ENCODE measurements at regions of chr10 and their contacts with region 1.

Region 1: DNA sequence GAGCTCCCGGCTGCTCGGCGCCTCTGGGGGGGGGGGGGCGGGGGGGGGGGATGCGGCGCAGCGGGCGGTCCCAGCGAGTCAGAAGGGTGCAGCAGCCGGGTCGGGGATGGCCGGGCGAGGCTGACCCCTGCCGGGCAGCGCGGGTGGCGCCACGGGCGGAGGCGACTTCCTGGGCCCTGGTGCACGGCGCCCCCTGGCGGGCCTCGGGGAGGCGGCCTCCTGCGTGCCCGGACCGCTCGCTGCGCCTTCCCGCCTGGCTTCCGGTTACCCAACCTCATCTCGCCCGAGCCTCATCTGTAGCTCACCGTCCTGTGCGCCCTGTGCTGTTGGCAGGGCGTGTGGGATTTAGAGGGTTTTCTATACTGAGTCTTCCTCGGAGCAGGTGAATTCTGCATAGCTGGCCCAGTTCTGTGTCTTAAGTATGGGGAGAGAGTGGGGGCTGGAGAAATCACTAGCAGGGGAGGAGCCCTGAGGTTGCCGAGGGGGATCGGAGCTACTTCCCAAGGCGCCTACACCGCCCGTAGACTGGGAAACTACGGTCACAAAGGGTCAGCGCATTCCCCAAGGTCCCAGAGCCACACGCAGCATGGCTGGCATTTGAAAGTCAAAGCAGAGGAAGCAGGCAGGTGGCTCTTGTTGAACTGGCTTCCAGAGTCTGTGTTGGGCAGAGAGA is 28.3 kb upstream of the WDFY4 start:
- DNase-seq: peak; percentile 91 to 94 (median 94)
- H3K4me3 ChIP-seq: peak overlapping the region; percentile 30 to 79 (median 69)
- H3K27ac ChIP-seq: no peak overlapping the region
- H3K4me1 ChIP-seq: peaks cover 0 to 26% (median 21%) of the 10 kb centered on the region in 4 experiments
- H3K27me3 ChIP-seq: peaks cover 0 to 6% (median 2%) of the 10 kb centered on the region in 5 experiments

Region 2: GRCh38 chr10:48444266-48444665 is 212.1 kb before region 1 on chr10:
- CTCF ChIA-PET with region 1: interaction called, 10 read pairs
- POLR2A ChIA-PET with region 1: no interaction called
- DNase-seq: peak; percentile 72 to 81 (median 79)
- H3K4me3 ChIP-seq: no peak overlapping the region
- H3K27ac ChIP-seq: no peak overlapping the region
- H3K4me1 ChIP-seq: peaks cover 0 to 57% (median 31%) of the 10 kb centered on the region in 4 experiments
- H3K27me3 ChIP-seq: no peaks in the 10 kb centered on the region

Region 3: DNA sequence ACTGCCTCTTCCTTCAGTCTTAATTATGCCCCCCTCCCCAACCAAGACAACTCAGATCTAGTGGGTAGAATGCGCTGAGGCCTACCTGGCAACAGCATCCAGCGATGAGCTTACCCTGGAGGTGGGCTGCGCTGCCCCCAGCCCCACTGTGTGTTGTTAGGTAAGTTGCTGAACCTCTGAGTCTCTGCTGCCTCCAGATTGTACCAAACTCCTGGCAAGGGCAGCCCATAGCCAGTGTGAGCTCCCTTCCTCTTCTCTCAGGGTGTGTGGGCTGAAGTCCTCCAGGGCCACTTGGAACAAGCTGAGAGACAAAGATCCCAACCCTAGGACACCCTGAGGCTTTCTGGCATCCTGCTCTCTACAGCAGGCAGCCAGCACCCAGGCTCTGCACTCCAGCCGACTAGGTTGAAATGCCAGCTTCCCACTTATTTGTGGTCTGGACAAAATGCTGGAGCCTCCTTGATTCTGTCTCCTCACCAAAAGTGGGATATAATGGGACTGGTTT is 186.8 kb before region 1 on chr10:
- CTCF ChIA-PET with region 1: no interaction called
- POLR2A ChIA-PET with region 1: no interaction called
- DNase-seq: peak in 2 of 3 donors; percentile 36 to 56
- H3K4me3 ChIP-seq: peak overlapping the region in 3 of 7 experiments; percentile 11 to 35 (median 30)
- H3K27ac ChIP-seq: peak overlapping the region; percentile 86 to 93
- H3K4me1 ChIP-seq: peaks cover 8 to 87% (median 81%) of the 10 kb centered on the region in 4 experiments
- H3K27me3 ChIP-seq: no peaks in the 10 kb centered on the region

Region 4: DNA sequence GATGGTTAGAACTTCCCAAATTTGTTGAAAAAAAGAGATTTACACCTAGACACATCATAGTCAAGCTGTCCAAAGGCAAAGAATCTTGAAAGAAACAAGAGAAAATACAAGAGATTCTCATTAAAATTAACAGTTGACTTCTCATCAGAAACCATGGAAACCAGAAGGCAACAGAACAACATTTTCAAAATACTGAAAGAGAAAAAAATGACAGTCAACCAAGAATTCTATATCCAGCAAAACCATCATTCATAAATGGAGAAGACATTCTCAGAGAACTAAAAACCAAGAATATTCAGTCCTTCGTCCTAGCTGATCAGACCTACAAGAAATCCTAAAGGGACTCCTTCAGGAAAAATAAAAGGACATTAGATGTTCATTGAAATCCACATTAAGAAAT is 142.1 kb before region 1 on chr10:
- CTCF ChIA-PET with region 1: no interaction called
- POLR2A ChIA-PET with region 1: no interaction called
- DNase-seq: peak in 2 of 3 donors; percentile 71 to 75
- H3K4me3 ChIP-seq: no peak overlapping the region
- H3K27ac ChIP-seq: peak overlapping the region in 1 of 2 experiments; percentile 74
- H3K4me1 ChIP-seq: peaks cover 9 to 63% (median 38%) of the 10 kb centered on the region in 4 experiments
- H3K27me3 ChIP-seq: no peaks in the 10 kb centered on the region

Region 5: DNA sequence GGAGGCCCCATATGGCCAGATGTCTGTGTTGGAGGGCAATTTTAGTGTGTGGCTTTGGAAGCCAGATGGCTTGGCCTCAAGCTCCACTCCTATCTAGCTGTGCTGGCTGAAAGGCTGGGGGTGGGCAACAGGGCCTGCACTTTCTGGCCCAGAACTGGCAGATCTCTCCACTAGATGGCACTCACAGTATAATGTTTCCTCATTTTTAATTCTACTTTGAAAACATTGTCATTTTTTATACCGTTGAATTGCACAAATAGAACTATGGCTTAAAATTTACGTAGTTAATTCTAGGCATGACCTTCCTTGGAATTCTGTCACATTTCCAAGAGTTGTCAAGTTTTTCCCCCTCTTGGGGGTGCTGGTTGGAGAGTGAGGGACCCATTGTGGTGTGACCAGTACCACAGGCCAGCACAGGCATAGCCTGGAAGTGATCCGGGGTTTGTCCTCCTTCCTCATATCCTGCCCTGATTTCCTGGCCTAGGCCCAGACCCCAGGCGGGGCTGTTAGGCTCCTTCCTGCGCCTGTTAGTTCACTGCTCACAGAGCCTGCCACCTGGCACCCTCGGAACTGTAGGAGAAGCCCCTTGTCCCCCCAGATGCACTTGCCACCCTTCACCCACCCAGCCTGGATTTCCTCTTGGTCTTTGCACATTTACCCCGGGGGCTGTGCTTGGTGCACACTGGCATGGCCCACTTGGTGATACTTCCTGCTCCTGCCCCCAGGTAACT is 104.4 kb before region 1 on chr10:
- CTCF ChIA-PET with region 1: interaction called, 381 read pairs
- POLR2A ChIA-PET with region 1: no interaction called
- DNase-seq: peak; percentile 66 to 83 (median 79)
- H3K4me3 ChIP-seq: peak overlapping the region in 1 of 7 experiments; percentile 17
- H3K27ac ChIP-seq: no peak overlapping the region
- H3K4me1 ChIP-seq: peaks cover 0 to 11% (median 6%) of the 10 kb centered on the region in 4 experiments
- H3K27me3 ChIP-seq: no peaks in the 10 kb centered on the region

Region 6: DNA sequence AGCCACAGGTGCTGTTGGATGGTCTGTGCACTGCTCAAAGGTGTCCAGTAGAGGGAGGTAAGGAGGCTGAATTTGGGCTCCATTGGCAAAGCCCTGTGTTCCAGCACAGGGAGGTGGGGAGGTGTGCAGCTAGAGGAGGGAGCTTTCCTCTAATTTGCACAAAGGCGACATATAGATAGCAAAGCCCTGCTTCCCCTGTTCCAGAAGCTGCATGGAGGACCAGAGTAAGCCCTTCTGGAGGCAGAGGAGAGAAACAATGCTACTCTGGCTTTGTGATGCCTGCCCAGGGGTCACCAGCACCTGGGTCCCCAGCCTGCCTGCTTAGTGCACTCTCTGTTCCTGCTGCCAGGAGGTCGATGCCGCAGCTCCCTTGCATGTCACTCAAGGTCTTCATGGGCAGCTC is 48.1 kb before region 1 on chr10:
- CTCF ChIA-PET with region 1: interaction called, 173 read pairs
- POLR2A ChIA-PET with region 1: interaction called, 8 read pairs
- DNase-seq: peak; percentile 38 to 60 (median 55)
- H3K4me3 ChIP-seq: no peak overlapping the region
- H3K27ac ChIP-seq: no peak overlapping the region
- H3K4me1 ChIP-seq: peaks cover 0 to 28% (median 23%) of the 10 kb centered on the region in 4 experiments
- H3K27me3 ChIP-seq: peaks cover 2 to 20% (median 6%) of the 10 kb centered on the region in 5 experiments

Region 7: DNA sequence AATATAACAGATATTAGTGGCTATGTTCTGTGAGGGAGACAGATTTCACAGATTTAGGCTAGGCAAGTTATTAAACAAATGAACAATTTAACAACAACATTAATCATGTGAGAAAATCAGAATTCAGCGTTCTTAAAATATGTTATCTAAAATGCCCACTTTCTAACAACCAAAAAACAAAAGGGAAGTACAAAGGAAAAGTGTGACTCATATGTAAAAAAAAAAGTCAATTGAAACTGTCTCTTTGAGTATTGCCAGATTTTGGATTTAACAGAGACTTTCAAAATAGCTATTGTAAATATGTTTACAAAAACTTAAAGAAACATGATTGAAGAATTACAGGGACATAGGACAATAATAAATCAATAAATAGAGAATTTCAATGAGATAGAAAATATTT is 16.7 kb before region 1 on chr10:
- CTCF ChIA-PET with region 1: interaction called, 44 read pairs
- POLR2A ChIA-PET with region 1: no interaction called
- DNase-seq: peak in 2 of 3 donors; percentile 58 to 68
- H3K4me3 ChIP-seq: peak overlapping the region in 1 of 7 experiments; percentile 20
- H3K27ac ChIP-seq: no peak overlapping the region
- H3K4me1 ChIP-seq: peaks cover 0 to 38% (median 30%) of the 10 kb centered on the region in 4 experiments
- H3K27me3 ChIP-seq: no peaks in the 10 kb centered on the region

Region 8: GRCh38 chr10:48907730-48908129 is 251.4 kb after region 1 on chr10:
- CTCF ChIA-PET with region 1: no interaction called
- POLR2A ChIA-PET with region 1: no interaction called
- DNase-seq: no peak
- H3K4me3 ChIP-seq: no peak overlapping the region
- H3K27ac ChIP-seq: no peak overlapping the region
- H3K4me1 ChIP-seq: no peaks in the 10 kb centered on the region
- H3K27me3 ChIP-seq: no peaks in the 10 kb centered on the region

Region 9: DNA sequence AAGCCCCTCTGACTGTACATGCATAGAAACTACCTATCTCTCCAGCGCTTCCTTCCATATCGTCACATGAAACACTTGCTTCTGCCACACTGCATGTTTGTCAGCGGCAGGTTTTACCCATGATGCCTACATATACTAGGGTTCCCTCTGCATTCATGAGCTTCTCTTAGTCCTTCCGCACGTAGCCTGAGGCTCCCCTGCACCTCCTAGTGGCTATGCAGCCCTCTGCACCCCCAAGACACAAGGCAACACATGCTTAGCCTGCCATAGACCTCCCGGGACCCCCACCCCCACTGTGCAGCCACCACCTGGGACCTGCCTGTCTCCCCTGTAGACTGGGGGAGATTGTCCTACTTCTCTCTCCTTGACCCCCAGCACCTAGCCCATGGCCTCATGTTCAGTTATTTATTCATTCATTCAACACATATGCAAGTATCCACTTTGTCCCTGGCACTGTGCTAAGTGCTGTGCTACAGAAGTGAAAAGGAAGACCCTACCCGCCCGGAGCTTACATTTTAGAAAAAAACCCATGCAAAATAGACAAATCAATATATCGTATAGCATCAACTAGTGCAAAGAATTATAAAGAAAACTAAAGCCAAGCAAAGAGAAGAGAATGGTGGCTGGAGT is 508.3 kb after region 1 on chr10:
- CTCF ChIA-PET with region 1: interaction called, 12 read pairs
- POLR2A ChIA-PET with region 1: no interaction called
- DNase-seq: peak; percentile 75 to 87 (median 83)
- H3K4me3 ChIP-seq: peak overlapping the region in 1 of 7 experiments; percentile 7
- H3K27ac ChIP-seq: no peak overlapping the region
- H3K4me1 ChIP-seq: peaks cover 0 to 14% (median 6%) of the 10 kb centered on the region in 4 experiments
- H3K27me3 ChIP-seq: no peaks in the 10 kb centered on the region